AG04450 (cell line): ENCODE measurements at regions of chr3 and their contacts with region 1.

Region 1: GRCh38 chr3:112814266-112814665 is 32.4 kb downstream of the CD200R1L start:
- DNase-seq: peak; percentile 60
- H3K4me3 ChIP-seq: no peak overlapping the region
- H3K27ac ChIP-seq: no peak overlapping the region
- H3K27me3 ChIP-seq: no peaks in the 10 kb centered on the region
- CTCF ChIP-seq: peak; percentile 77

Region 2: DNA sequence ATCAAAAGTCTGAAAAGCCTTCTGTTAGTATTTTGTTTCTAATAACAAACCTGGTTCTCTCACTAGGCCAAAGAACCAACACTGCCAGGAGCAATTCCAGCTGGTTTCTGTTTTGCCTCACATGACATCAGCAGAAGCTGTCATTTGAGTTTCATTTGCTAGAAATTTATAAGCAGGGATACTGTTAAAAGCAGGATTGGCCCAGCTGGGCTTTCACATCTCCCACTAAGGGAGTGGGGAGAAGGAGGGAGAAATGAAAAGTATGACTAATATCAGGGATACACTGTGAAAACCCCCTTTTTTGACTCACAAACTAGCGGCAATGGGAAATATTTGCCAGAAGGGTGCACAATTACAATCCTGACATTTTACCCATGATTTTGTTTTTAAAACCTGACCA is 178.6 kb before region 1 on chr3:
- CTCF ChIA-PET with region 1: interaction called, 128 read pairs
- POLR2A ChIA-PET with region 1: interaction called, 9 read pairs
- DNase-seq: peak; percentile 90
- H3K4me3 ChIP-seq: peak overlapping the region; percentile 85
- H3K27ac ChIP-seq: peak overlapping the region; percentile 91
- H3K27me3 ChIP-seq: no peaks in the 10 kb centered on the region
- CTCF ChIP-seq: peak; percentile 27; the same call in 1 of the 2 replicates

Region 3: GRCh38 chr3:112642912-112643506 is 171.3 kb before region 1 on chr3:
- CTCF ChIA-PET with region 1: interaction called, 128 read pairs
- POLR2A ChIA-PET with region 1: interaction called, 17 read pairs
- DNase-seq: peak; percentile 86
- H3K4me3 ChIP-seq: peak overlapping the region; percentile 28
- H3K27ac ChIP-seq: no peak overlapping the region
- H3K27me3 ChIP-seq: no peaks in the 10 kb centered on the region
- CTCF ChIP-seq: peak; percentile 96

Region 4: DNA sequence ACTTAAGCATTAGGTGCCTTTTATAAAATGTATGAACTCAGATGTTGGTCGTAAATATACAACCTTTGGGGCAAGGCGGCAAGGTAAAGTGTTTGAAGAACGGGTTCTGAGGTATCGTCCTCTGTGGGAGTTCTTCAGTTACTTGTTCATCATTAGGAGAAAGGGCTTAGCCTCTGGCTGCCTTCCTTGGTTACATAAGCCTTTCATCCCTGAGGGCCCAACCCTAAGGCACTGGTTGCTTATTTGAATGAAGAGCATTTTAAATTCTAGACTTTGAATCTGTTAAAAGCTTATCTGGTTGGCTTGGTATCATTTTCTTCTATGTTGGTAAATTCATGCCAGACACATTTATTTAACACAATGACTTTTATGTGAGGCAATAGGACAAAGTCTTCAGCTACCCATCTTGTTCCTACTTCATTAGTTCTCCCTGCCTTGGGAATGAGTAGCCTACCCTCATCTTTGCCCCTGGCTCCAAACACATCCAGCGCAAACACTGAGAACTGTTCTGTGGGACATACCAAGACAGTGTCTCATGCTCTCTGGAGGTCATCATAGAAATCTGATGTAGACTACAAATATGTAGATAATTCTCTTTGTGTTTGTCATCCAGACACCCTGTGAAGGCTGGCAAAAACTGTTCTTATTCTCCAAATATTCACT is 160.9 kb before region 1 on chr3:
- CTCF ChIA-PET with region 1: interaction called, 26 read pairs
- POLR2A ChIA-PET with region 1: interaction called, 10 read pairs
- DNase-seq: peak; percentile 92
- H3K4me3 ChIP-seq: no peak overlapping the region
- H3K27ac ChIP-seq: peak overlapping the region; percentile 99
- H3K27me3 ChIP-seq: no peaks in the 10 kb centered on the region
- CTCF ChIP-seq: no peak

Region 5: DNA sequence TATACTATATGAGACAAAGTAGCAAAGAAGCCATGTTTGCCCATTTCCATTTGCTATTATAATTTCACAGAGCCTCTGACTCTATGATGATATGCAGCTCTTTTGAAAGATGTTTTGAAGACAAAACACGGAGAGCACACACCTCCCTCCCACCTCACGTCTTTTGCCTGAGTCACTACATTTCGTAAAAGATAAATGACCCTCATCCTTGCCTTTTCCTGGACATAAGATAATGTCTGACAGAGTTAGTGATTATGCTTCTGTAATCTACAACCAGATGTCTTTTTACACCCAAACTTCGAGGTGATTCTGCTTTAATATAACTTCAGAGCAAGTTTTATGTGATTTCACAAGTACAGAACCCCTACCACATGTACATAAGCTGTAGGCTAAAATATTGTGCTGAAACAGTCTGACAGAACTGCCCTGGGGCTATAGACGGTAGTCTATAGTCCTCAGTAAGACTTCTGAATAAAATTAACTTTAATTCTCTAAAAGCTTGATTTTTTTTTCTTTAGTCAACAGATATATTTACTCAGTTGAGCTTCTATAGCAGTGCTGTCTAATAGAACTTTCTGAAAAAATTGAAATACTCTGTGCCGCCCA is 67.5 kb before region 1 on chr3:
- CTCF ChIA-PET with region 1: interaction called, 11 read pairs
- POLR2A ChIA-PET with region 1: no interaction called
- DNase-seq: no peak
- H3K4me3 ChIP-seq: no peak overlapping the region
- H3K27ac ChIP-seq: no peak overlapping the region
- H3K27me3 ChIP-seq: no peaks in the 10 kb centered on the region
- CTCF ChIP-seq: no peak